ENCODE measurements at regions of chr17 and their contacts with region 1.

Region 1: DNA sequence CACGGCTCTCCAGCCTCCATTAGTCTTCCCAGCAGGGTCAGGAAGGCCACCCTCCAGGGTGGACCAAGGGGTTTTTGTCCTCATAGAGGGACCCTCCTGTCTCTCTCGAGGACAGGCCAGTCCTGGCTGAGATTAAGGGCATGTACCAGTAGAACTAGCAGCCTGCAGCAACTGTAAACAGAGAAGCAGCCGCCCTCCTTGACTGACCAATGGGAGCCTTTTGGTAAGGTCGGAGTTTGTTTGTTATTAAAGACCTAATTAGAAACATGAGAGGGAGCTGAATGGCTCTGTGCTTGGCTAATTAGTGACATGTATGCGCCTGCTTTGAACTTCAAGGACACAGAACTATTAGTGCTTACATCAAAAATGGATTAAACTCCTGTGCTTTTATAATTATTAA is 80.0 kb downstream of the CCDC182 start:
- DNase-seq: no peak
- ATAC-seq: no peak

Region 2: GRCh38 chr17:57597531-57598453 is 67.3 kb before region 1 on chr17:
- intact Hi-C with region 1: loop called (anchors 5 kb)
- DNase-seq: peak; percentile 76
- ATAC-seq: peak; percentile 82

Measured in Right ventricle myocardium superior (tissue), 1 donor.